Activated T-helper 2 cell treated with anti-CD3 and anti-CD28 coated beads, Interferon-gamma antibody, Interleukin-2, Interleukin-4, amounts not matched to agents 10 μg/mL and 5 μg/mL and 100 μg/mL, durations not matched to agents 14 hours and 24 hours and 36 hours (primary cell): ENCODE measurements at regions of chr5 and their contacts with region 1.

Region 1: DNA sequence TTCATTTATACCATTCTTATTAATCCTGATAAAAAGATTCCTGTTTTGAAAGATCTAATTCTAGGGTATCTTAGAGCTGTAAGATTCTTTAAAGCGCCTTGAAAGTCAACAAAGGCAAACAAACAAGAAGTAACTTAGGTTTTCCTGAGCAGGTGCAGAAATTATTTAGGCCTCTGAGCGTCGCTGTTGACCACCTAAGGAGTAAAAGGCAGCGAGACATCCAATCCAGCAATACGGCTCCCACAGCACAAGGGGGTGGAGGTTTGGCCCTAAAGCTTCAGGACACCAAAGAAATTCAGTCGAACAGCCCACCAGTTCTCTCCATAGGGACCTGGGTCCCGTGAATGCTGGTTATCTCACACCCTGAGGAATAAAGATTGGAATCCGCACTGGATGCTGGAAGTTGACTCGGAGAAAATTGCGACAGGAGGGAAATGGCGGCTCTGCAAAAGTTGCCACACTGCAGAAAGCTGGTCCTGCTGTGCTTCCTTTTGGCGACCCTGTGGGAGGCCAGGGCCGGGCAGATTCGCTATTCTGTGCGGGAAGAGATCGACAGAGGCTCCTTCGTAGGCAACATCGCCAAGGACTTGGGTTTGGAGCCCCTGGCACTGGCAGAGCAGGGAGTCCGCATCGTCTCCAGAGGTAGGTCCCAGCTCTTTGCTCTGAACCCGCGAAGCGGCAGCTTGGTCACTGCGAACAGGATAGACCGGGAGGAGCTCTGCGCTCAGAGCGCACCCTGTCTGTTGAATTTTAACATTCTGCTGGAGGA is at the start of gene PCDHGA2:
- DNase-seq: no peak
- H3K4me3 Mint-ChIP-seq: peak within 1 kb of the TSS; percentile 73
- H3K27ac Mint-ChIP-seq: no peak within 1 kb of the TSS
- H3K4me1 Mint-ChIP-seq: peaks cover 3% of the 10 kb centered on the region
- H3K27me3 Mint-ChIP-seq: peaks cover 34% of the 10 kb centered on the region
- total RNA-seq, gene PCDHGA2: 0.09 and 0.11 TPM in 2 replicates

Region 2: GRCh38 chr5:141186897-141187512 is 151.7 kb before region 1 on chr5 and contains the start of gene PCDHB9:
- intact Hi-C with region 1: loop called (anchors 5 kb)
- DNase-seq: no peak
- H3K4me3 Mint-ChIP-seq: peak within 1 kb of the TSS; percentile 18
- H3K27ac Mint-ChIP-seq: no peak within 1 kb of the TSS
- H3K4me1 Mint-ChIP-seq: peaks cover 2% of the 10 kb centered on the region
- H3K27me3 Mint-ChIP-seq: peaks cover 2% of the 10 kb centered on the region
- total RNA-seq, gene PCDHB9: not detected in 2 replicates

Region 3: DNA sequence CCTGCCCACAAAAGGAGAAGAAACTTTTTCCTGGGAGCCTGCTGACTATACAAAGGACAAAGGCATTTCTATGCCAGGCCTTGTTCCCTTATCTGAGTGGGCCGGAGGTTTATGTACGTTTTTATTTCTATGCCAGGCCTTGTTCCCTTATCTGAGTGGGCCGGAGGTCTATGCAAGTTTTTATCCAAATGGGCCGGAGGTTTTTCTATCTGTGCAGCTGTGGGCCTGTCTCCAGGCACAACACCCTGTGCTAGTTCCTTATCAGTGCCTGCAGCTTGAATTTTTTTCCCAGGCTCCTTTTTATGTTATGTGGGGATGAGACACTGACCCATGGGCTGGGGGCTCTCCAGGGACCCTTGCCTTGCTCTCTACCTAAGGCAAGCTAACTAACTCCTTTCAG is 40.3 kb before region 1 on chr5:
- intact Hi-C with region 1: no loop called
- DNase-seq: no peak
- H3K4me3 Mint-ChIP-seq: no peak overlapping the region
- H3K27ac Mint-ChIP-seq: no peak overlapping the region
- H3K4me1 Mint-ChIP-seq: no peaks in the 10 kb centered on the region
- H3K27me3 Mint-ChIP-seq: no peaks in the 10 kb centered on the region